Breast epithelium (tissue), 4 donors: ENCODE measurements at regions of chr6 and their contacts with region 1.

Region 1: DNA sequence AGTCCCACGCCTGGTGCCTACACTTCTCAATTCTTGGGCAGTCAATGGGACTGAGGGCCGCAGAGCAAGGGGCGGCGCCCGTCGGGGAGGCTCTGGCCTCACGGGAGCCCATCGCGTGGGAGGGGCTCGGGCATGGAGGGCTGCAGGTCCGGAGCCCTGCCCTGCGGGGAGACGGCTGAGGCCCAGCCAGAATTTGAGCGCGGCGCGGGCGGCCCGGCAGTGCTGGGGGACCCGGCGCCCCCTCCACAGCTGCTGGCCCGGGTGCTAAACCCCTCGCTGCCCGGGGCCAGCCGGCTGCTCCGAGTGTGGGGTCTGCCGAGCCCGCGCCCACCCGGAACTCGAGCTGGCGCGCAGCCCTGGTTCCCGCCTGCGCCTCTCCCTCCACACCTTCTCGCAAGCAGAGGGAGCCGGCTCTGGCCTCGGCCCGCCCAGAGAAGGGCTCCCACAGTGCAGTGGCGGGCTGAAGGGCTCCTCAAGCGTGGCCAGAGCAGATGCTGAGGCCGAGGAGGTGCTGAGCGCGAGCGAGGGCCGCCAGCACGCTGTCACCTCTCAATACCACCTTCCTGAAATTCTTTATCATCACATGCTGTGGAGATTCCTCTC is 58.5 kb downstream of the BAK1 start:
- DNase-seq: no peak
- H3K4me3 ChIP-seq: no peak overlapping the region
- H3K27ac ChIP-seq: no peak overlapping the region
- H3K4me1 ChIP-seq: no peaks in the 10 kb centered on the region
- H3K27me3 ChIP-seq: no peaks in the 10 kb centered on the region
- CTCF ChIP-seq: no peak
- POLR2A ChIP-seq: no peak

Region 2: GRCh38 chr6:33983105-33983716 is 461.6 kb after region 1 on chr6:
- intact Hi-C with region 1: loop called (anchors 10 kb)
- DNase-seq: peak; percentile 41 to 61
- H3K4me3 ChIP-seq: peak overlapping the region in 1 of 3 donors; percentile 45
- H3K27ac ChIP-seq: peak overlapping the region in 1 of 2 donors; percentile 20
- H3K4me1 ChIP-seq: no peaks in the 10 kb centered on the region
- H3K27me3 ChIP-seq: no peaks in the 10 kb centered on the region
- CTCF ChIP-seq: no peak
- POLR2A ChIP-seq: no peak